ENCODE measurements at regions of chr16 and their contacts with region 1.

Region 1: GRCh38 chr16:66521951-66522771 is 27.8 kb downstream of the TK2 start:
- DNase-seq: peak; percentile 41 to 93 (median 80)
- ATAC-seq: peak; percentile 76
- H3K4me3 ChIP-seq: peak overlapping the region; percentile 2
- H3K4me3 Mint-ChIP-seq: peak overlapping the region; percentile 74
- H3K27ac ChIP-seq: peak overlapping the region; percentile 14 to 49
- H3K27ac Mint-ChIP-seq: peak overlapping the region; percentile 93
- H3K4me1 ChIP-seq: peaks cover 84% of the 10 kb centered on the region
- H3K4me1 Mint-ChIP-seq: peaks cover 86% of the 10 kb centered on the region
- H3K27me3 ChIP-seq: no peaks in the 10 kb centered on the region
- H3K27me3 Mint-ChIP-seq: no peaks in the 10 kb centered on the region
- CTCF ChIP-seq: no peak

Region 2: DNA sequence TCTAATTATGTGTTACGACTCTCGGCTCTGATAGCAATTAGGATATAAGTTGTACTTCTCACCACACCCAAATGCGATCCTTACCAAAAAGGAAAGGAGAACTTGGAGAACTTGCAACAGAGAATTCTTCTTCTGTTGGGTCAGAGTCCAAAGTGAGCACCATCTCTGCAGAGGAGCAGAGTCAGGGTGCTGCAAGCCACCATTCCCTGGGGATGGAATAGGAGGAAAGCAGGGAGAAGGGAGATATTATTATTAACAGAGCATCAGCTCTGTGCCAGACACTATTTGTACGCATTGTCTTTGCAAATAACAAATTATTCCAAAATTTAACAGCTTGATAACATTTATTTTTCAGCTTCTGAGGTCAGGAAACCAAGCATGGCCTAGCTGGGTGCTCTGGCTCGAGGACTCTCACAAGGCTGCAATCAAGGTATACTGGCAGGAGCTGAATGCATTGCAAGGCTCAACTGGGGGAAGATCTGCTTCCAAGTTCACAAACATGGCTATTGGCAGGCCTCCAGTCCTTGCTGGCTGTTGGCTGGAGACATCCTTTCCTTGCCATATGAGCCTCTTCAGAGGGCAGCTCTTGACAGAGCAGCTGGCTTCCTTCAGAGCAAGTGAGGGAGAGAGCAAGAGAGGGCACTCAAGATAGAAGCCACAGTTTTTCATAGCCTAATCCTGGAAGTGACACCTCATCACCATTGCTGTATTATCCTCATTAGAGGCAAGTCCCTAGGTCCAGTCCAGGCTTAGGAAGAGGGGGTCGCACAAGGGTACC is 451.8 kb before region 1 on chr16:
- CTCF ChIA-PET with region 1: no interaction called
- POLR2A ChIA-PET with region 1: no interaction called
- intact Hi-C with region 1: no loop called
- DNase-seq: no peak
- ATAC-seq: no peak
- H3K4me3 ChIP-seq: no peak overlapping the region
- H3K4me3 Mint-ChIP-seq: no peak overlapping the region
- H3K27ac ChIP-seq: no peak overlapping the region
- H3K27ac Mint-ChIP-seq: no peak overlapping the region
- H3K4me1 ChIP-seq: no peaks in the 10 kb centered on the region
- H3K4me1 Mint-ChIP-seq: no peaks in the 10 kb centered on the region
- H3K27me3 ChIP-seq: no peaks in the 10 kb centered on the region
- H3K27me3 Mint-ChIP-seq: peaks cover 47% of the 10 kb centered on the region
- CTCF ChIP-seq: no peak

Region 3: GRCh38 chr16:66175636-66176035 is 346.5 kb before region 1 on chr16:
- CTCF ChIA-PET with region 1: no interaction called
- POLR2A ChIA-PET with region 1: no interaction called
- intact Hi-C with region 1: no loop called
- DNase-seq: no peak
- ATAC-seq: no peak
- H3K4me3 ChIP-seq: no peak overlapping the region
- H3K4me3 Mint-ChIP-seq: no peak overlapping the region
- H3K27ac ChIP-seq: no peak overlapping the region
- H3K27ac Mint-ChIP-seq: no peak overlapping the region
- H3K4me1 ChIP-seq: no peaks in the 10 kb centered on the region
- H3K4me1 Mint-ChIP-seq: no peaks in the 10 kb centered on the region
- H3K27me3 ChIP-seq: peaks cover 0 to 5% of the 10 kb centered on the region in 2 experiments
- H3K27me3 Mint-ChIP-seq: peaks cover 23% of the 10 kb centered on the region
- CTCF ChIP-seq: no peak

Region 4: GRCh38 chr16:66483689-66484481 is 38.3 kb before region 1 on chr16:
- CTCF ChIA-PET with region 1: no interaction called
- POLR2A ChIA-PET with region 1: no interaction called
- intact Hi-C with region 1: no loop called
- DNase-seq: peak; percentile 57 to 83 (median 68)
- ATAC-seq: peak; percentile 85
- H3K4me3 ChIP-seq: no peak overlapping the region
- H3K4me3 Mint-ChIP-seq: no peak overlapping the region
- H3K27ac ChIP-seq: no peak overlapping the region
- H3K27ac Mint-ChIP-seq: peak overlapping the region; percentile 28
- H3K4me1 ChIP-seq: peaks cover 23% of the 10 kb centered on the region
- H3K4me1 Mint-ChIP-seq: peaks cover 15% of the 10 kb centered on the region
- H3K27me3 ChIP-seq: no peaks in the 10 kb centered on the region
- H3K27me3 Mint-ChIP-seq: no peaks in the 10 kb centered on the region
- CTCF ChIP-seq: peak; percentile 95

Region 5: GRCh38 chr16:66511615-66512500 is 10.3 kb before region 1 on chr16:
- CTCF ChIA-PET with region 1: interaction called, 13 read pairs
- POLR2A ChIA-PET with region 1: interaction called, 28 read pairs
- intact Hi-C with region 1: no loop called
- DNase-seq: peak in 4 of 14 experiments; percentile 36 to 46 (median 40)
- ATAC-seq: no peak
- H3K4me3 ChIP-seq: no peak overlapping the region
- H3K4me3 Mint-ChIP-seq: no peak overlapping the region
- H3K27ac ChIP-seq: no peak overlapping the region
- H3K27ac Mint-ChIP-seq: no peak overlapping the region
- H3K4me1 ChIP-seq: peaks cover 52% of the 10 kb centered on the region
- H3K4me1 Mint-ChIP-seq: peaks cover 24% of the 10 kb centered on the region
- H3K27me3 ChIP-seq: no peaks in the 10 kb centered on the region
- H3K27me3 Mint-ChIP-seq: no peaks in the 10 kb centered on the region
- CTCF ChIP-seq: no peak